ENCODE measurements at regions of chr2 and their contacts with region 1.

Region 1: DNA sequence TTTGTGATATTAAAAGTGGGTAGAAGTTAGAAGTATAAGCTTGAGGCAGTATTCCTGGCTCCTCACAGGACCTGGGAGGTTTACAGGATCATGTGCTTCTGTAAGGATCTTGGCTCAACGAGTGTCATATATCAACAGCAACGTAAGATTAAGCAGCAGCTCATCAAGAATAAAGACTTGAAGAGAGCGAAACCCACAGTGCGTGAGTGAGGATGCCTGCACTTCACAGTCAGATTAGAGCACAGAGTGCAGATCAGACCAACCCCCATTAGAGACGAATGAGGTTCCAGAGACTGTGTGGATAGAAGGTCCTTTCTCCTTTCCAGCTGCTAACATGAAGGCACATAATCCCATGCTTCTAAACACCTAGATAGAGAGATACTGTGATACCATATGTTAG is 1656.7 kb upstream of the NXPH2 start:
- DNase-seq: no peak
- H3K4me3 Mint-ChIP-seq: no peak overlapping the region
- H3K27ac Mint-ChIP-seq: no peak overlapping the region
- H3K4me1 Mint-ChIP-seq: no peaks in the 10 kb centered on the region
- H3K27me3 Mint-ChIP-seq: no peaks in the 10 kb centered on the region

Region 2: DNA sequence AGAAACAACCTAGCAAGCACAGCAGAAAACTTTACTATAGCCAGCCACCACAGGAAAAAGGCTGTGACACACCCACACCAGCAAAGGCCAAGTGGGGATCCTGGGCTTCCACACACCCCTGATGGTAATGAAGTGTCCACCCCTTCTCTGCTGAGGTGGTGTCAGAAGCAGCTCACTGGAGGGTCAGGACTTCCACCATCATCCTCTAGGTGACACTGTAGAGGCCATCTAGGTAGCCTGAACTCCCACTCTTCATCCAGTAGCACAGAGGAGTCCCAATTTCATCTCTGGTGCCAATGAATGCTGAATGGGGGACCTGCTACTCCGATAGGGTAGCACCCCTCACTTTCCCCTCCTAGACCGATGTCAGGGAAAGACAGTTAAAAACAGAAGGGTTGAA is 149.4 kb after region 1 on chr2:
- CTCF ChIA-PET with region 1: no interaction called
- intact Hi-C with region 1: loop called (anchors 10 kb)
- DNase-seq: peak; percentile 4
- H3K4me3 Mint-ChIP-seq: no peak overlapping the region
- H3K27ac Mint-ChIP-seq: no peak overlapping the region
- H3K4me1 Mint-ChIP-seq: no peaks in the 10 kb centered on the region
- H3K27me3 Mint-ChIP-seq: no peaks in the 10 kb centered on the region